ENCODE measurements at regions of chr20 and their contacts with region 1.

Region 1: GRCh38 chr20:2752567-2753460 is 47.6 kb downstream of the CPXM1 start:
- DNase-seq: peak; percentile 29 to 89
- H3K4me3 ChIP-seq: peak overlapping the region; percentile 33 to 62 (median 44)
- H3K27ac ChIP-seq: no peak overlapping the region
- H3K4me1 ChIP-seq: peaks cover 2 to 38% (median 25%) of the 10 kb centered on the region in 4 experiments
- H3K27me3 ChIP-seq: peaks cover 39 to 64% (median 61%) of the 10 kb centered on the region in 4 experiments
- CTCF ChIP-seq: peak; percentile 79 to 91 (median 81)
- EP300 ChIP-seq: no peak
- POLR2A ChIP-seq: no peak
- RAD21 ChIP-seq: peak; percentile 71 to 84

Region 2: DNA sequence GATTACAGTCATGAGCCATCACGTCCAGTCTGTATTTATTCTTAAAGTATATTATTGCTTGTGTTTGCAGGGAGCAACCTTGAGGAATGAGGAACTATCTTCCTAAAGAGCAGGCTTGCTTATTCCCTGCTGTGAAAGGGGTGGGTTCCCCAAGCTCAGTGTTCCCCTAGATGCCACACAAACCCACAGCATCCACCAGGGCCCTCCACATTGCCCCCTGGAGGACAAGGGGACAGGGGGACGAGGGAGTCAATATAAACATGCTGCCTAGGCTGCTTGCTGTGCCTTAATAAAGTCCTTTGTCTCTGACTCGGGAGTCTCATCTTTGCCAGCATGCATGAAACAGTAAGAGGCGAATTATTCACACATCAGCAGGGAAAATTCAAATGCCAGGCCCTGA is 80.8 kb before region 1 on chr20:
- CTCF ChIA-PET with region 1: interaction called, 10 read pairs
- POLR2A ChIA-PET with region 1: no interaction called
- DNase-seq: peak in 1 of 2 experiments; percentile 72
- H3K4me3 ChIP-seq: no peak overlapping the region
- H3K27ac ChIP-seq: no peak overlapping the region
- H3K4me1 ChIP-seq: 0 out of 7 replicates have a peak, but pooled peaks cover 0 to 4% (median 0%) of the 10 kb centered on the region in 4 experiments
- H3K27me3 ChIP-seq: no peaks in the 10 kb centered on the region; a peak in 3 of 7 replicates
- CTCF ChIP-seq: peak; percentile 69 to 81 (median 80)
- EP300 ChIP-seq: no peak
- POLR2A ChIP-seq: no peak
- RAD21 ChIP-seq: peak; percentile 20 to 47; a peak in 2 of 4 replicates

Region 3: GRCh38 chr20:2697768-2698167 is 55.0 kb before region 1 on chr20:
- CTCF ChIA-PET with region 1: interaction called, 151 read pairs
- POLR2A ChIA-PET with region 1: interaction called, 8 read pairs
- DNase-seq: peak in 1 of 2 experiments; percentile 39
- H3K4me3 ChIP-seq: no peak overlapping the region
- H3K27ac ChIP-seq: no peak overlapping the region
- H3K4me1 ChIP-seq: peaks cover 0 to 32% (median 24%) of the 10 kb centered on the region in 4 experiments; a peak in 6 of 7 replicates
- H3K27me3 ChIP-seq: peaks cover 24 to 73% (median 60%) of the 10 kb centered on the region in 4 experiments
- CTCF ChIP-seq: no peak
- EP300 ChIP-seq: no peak
- POLR2A ChIP-seq: no peak
- RAD21 ChIP-seq: no peak

Region 4: GRCh38 chr20:2767768-2768631 is 15.2 kb after region 1 on chr20:
- CTCF ChIA-PET with region 1: interaction called, 43 read pairs
- POLR2A ChIA-PET with region 1: interaction called, 3 read pairs
- DNase-seq: no peak
- H3K4me3 ChIP-seq: no peak overlapping the region
- H3K27ac ChIP-seq: no peak overlapping the region
- H3K4me1 ChIP-seq: peaks cover 0 to 3% (median under 1%) of the 10 kb centered on the region in 4 experiments; a peak in 2 of 7 replicates
- H3K27me3 ChIP-seq: no peaks in the 10 kb centered on the region; a peak in 1 of 7 replicates
- CTCF ChIP-seq: no peak
- EP300 ChIP-seq: no peak
- POLR2A ChIP-seq: no peak
- RAD21 ChIP-seq: no peak

Region 5: GRCh38 chr20:2849529-2849928 is 96.7 kb after region 1 on chr20:
- CTCF ChIA-PET with region 1: interaction called, 94 read pairs
- POLR2A ChIA-PET with region 1: interaction called, 4 read pairs
- DNase-seq: no peak
- H3K4me3 ChIP-seq: no peak overlapping the region
- H3K27ac ChIP-seq: no peak overlapping the region
- H3K4me1 ChIP-seq: peaks cover 0 to 4% (median 0%) of the 10 kb centered on the region in 4 experiments; a peak in 3 of 7 replicates
- H3K27me3 ChIP-seq: no peaks in the 10 kb centered on the region
- CTCF ChIP-seq: no peak
- EP300 ChIP-seq: no peak
- POLR2A ChIP-seq: no peak
- RAD21 ChIP-seq: no peak

Region 6: GRCh38 chr20:3000852-3001523 is 248.2 kb after region 1 on chr20:
- CTCF ChIA-PET with region 1: interaction called, 14 read pairs
- POLR2A ChIA-PET with region 1: no interaction called
- DNase-seq: no peak
- H3K4me3 ChIP-seq: no peak overlapping the region
- H3K27ac ChIP-seq: no peak overlapping the region
- H3K4me1 ChIP-seq: peaks cover 0 to 5% (median 2%) of the 10 kb centered on the region in 4 experiments; a peak in 1 of 7 replicates
- H3K27me3 ChIP-seq: no peaks in the 10 kb centered on the region
- CTCF ChIP-seq: peak in 2 of 3 experiments; percentile 45 to 53; a peak in 2 of 4 replicates
- EP300 ChIP-seq: no peak
- POLR2A ChIP-seq: no peak
- RAD21 ChIP-seq: peak; percentile 73 to 79